ENCODE measurements at regions of chr14 and their contacts with region 1.

Region 1: GRCh38 chr14:80941241-80942182 is at the start of gene CEP128:
- DNase-seq: peak; percentile 80
- ATAC-seq: peak; percentile 92
- H3K4me3 ChIP-seq: peak within 1 kb of the TSS; percentile 71 to 83 (median 71)
- H3K4me3 Mint-ChIP-seq: peak within 1 kb of the TSS; percentile 84
- H3K27ac ChIP-seq: peak within 1 kb of the TSS; percentile 15 to 59
- H3K27ac Mint-ChIP-seq: peak within 1 kb of the TSS; percentile 71
- H3K4me1 ChIP-seq: peaks cover 15 to 18% of the 10 kb centered on the region in 2 donors
- H3K4me1 Mint-ChIP-seq: peaks cover 19% of the 10 kb centered on the region
- H3K27me3 ChIP-seq: no peaks in the 10 kb centered on the region
- H3K27me3 Mint-ChIP-seq: no peaks in the 10 kb centered on the region
- CTCF ChIP-seq: no peak
- total RNA-seq, gene CEP128: 31.6 and 34.8 TPM in 2 replicates

Region 2: GRCh38 chr14:80784820-80785219 is 156.7 kb before region 1 on chr14:
- CTCF ChIA-PET with region 1: no interaction called
- POLR2A ChIA-PET with region 1: no interaction called
- intact Hi-C with region 1: no loop called
- DNase-seq: no peak
- ATAC-seq: no peak
- H3K4me3 ChIP-seq: no peak overlapping the region
- H3K4me3 Mint-ChIP-seq: no peak overlapping the region
- H3K27ac ChIP-seq: no peak overlapping the region
- H3K27ac Mint-ChIP-seq: no peak overlapping the region
- H3K4me1 ChIP-seq: no peaks in the 10 kb centered on the region
- H3K4me1 Mint-ChIP-seq: no peaks in the 10 kb centered on the region
- H3K27me3 ChIP-seq: no peaks in the 10 kb centered on the region
- H3K27me3 Mint-ChIP-seq: no peaks in the 10 kb centered on the region
- CTCF ChIP-seq: no peak

Region 3: GRCh38 chr14:80930836-80931389 is 10.6 kb before region 1 on chr14:
- CTCF ChIA-PET with region 1: interaction called, 4 read pairs
- POLR2A ChIA-PET with region 1: interaction called, 3 read pairs
- intact Hi-C with region 1: loop called (anchors 1 kb)
- DNase-seq: peak; percentile 64
- ATAC-seq: peak; percentile 90
- H3K4me3 ChIP-seq: peak overlapping the region in 2 of 5 experiments; percentile 15 to 23
- H3K4me3 Mint-ChIP-seq: peak overlapping the region; percentile 71
- H3K27ac ChIP-seq: peak overlapping the region in 1 of 2 donors; percentile 17
- H3K27ac Mint-ChIP-seq: peak overlapping the region; percentile 68
- H3K4me1 ChIP-seq: peaks cover 13 to 25% of the 10 kb centered on the region in 2 donors
- H3K4me1 Mint-ChIP-seq: peaks cover 28% of the 10 kb centered on the region
- H3K27me3 ChIP-seq: peaks cover 0 to 3% (median 0%) of the 10 kb centered on the region in 4 experiments
- H3K27me3 Mint-ChIP-seq: no peaks in the 10 kb centered on the region
- CTCF ChIP-seq: no peak

Measured in B cell (primary cell).